GM12878 (cell line): ENCODE measurements at regions of chrX and their contacts with region 1.

Region 1: GRCh38 chrX:46628460-46629371 is 55.2 kb downstream of the CHST7 start:
- DNase-seq: peak; percentile 91
- ATAC-seq: peak; percentile 94
- H3K4me3 ChIP-seq: no peak overlapping the region
- H3K27ac ChIP-seq: peak overlapping the region; percentile 85
- H3K4me1 ChIP-seq: peaks cover 33% of the 10 kb centered on the region
- H3K27me3 ChIP-seq: no peaks in the 10 kb centered on the region
- CTCF ChIP-seq: no peak
- EP300 ChIP-seq: peak; percentile 72 to 81; a peak in 3 of 4 replicates
- POLR2A ChIP-seq: peak; percentile 52; the same call in 1 of the 2 replicates
- RAD21 ChIP-seq: 0 out of 2 replicates have a peak, but pooled peaks have one; percentile 11

Region 2: GRCh38 chrX:46561824-46562657 is 66.7 kb before region 1 on chrX:
- CTCF ChIA-PET with region 1: interaction called, 4 read pairs
- POLR2A ChIA-PET with region 1: interaction called, 5 read pairs
- RAD21 ChIA-PET with region 1: interaction called, 21 read pairs
- SMC1A ChIA-PET with region 1: interaction called, 14 read pairs
- in situ Hi-C with region 1: no loop called
- intact Hi-C with region 1: loop called (anchors 2 kb)
- DNase-seq: peak; percentile 95
- ATAC-seq: peak; percentile 99
- H3K4me3 ChIP-seq: peak overlapping the region; percentile 4; the same call in 1 of the 2 replicates
- H3K27ac ChIP-seq: peak overlapping the region; percentile 62
- H3K4me1 ChIP-seq: peaks cover 20% of the 10 kb centered on the region
- H3K27me3 ChIP-seq: no peaks in the 10 kb centered on the region
- CTCF ChIP-seq: no peak
- EP300 ChIP-seq: peak; percentile 70 to 94
- POLR2A ChIP-seq: no peak
- RAD21 ChIP-seq: 0 out of 2 replicates have a peak, but pooled peaks have one; percentile 6

Region 3: DNA sequence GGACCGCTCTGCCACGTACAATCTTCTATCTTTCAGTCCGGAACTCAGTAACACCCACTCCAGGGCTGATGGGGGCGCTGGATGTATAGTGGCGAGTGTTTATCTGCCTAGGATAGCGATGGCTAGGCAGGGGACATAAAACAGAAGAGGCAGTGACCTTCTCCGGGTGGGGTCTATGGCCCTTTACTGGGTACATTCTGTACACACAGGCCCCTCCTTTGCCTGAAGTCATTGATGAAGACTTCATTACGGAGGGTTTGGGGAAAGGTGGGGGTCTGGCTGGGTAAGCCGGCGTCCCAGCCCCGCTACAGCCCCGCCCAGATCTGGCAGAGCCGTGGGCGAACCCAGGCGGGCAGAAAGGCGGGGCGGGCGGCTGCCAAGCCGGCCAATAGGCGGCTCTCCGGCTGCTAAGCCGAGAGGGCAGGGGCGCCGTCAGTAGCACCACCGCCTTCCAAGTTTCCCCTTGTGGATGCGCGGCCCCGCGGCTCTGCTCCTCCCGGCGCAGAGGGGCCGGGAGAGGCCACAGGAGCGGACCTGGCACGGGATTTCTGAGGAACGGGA is 55.3 kb before region 1 on chrX and contains the start of gene CHST7:
- CTCF ChIA-PET with region 1: interaction called, 3 read pairs
- POLR2A ChIA-PET with region 1: interaction called, 3 read pairs
- RAD21 ChIA-PET with region 1: interaction called, 15 read pairs
- SMC1A ChIA-PET with region 1: interaction called, 4 read pairs
- in situ Hi-C with region 1: no loop called
- intact Hi-C with region 1: no loop called
- DNase-seq: no peak
- ATAC-seq: peak; percentile 65
- H3K4me3 ChIP-seq: peak within 1 kb of the TSS; percentile 69
- H3K27ac ChIP-seq: peak within 1 kb of the TSS; percentile 80
- H3K4me1 ChIP-seq: peaks cover 26% of the 10 kb centered on the region
- H3K27me3 ChIP-seq: no peaks in the 10 kb centered on the region
- CTCF ChIP-seq: peak in 2 of 3 experiments; percentile 25 to 42; a peak in 3 of 6 replicates
- EP300 ChIP-seq: no peak
- POLR2A ChIP-seq: no peak
- RAD21 ChIP-seq: peak; percentile 38
- polyA plus RNA-seq, gene CHST7: 0.58 to 1.7 TPM

Region 4: GRCh38 chrX:46588263-46588662 is 40.5 kb before region 1 on chrX:
- CTCF ChIA-PET with region 1: interaction called, 6 read pairs
- POLR2A ChIA-PET with region 1: interaction called, 6 read pairs
- RAD21 ChIA-PET with region 1: interaction called, 12 read pairs
- SMC1A ChIA-PET with region 1: interaction called, 8 read pairs
- in situ Hi-C with region 1: no loop called
- intact Hi-C with region 1: no loop called
- DNase-seq: no peak
- ATAC-seq: peak; percentile 22; the same call in 1 of the 3 replicates
- H3K4me3 ChIP-seq: no peak overlapping the region
- H3K27ac ChIP-seq: peak overlapping the region; percentile 41
- H3K4me1 ChIP-seq: peaks cover 21% of the 10 kb centered on the region
- H3K27me3 ChIP-seq: no peaks in the 10 kb centered on the region
- CTCF ChIP-seq: no peak
- EP300 ChIP-seq: no peak
- POLR2A ChIP-seq: no peak
- RAD21 ChIP-seq: no peak

Region 5: DNA sequence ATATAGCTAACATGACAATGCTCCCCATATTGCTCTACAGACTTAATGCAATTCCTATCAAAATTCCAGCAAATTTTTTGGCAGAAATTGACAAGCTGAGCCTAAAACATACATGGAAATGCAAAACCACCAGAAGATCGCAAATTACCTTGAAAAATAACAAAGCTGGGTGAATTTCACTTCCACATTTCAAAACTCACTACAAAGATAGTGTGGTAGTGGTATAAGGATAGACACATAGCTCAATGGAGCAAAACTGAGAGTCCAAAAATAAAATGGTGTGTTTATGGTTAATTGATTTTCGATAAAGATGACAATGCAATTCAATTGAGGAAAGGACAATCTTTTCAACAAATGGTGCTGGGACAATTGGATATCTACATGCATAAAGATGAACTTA is 64.4 kb after region 1 on chrX:
- CTCF ChIA-PET with region 1: interaction called, 3 read pairs
- POLR2A ChIA-PET with region 1: no interaction called
- RAD21 ChIA-PET with region 1: interaction called, 10 read pairs
- SMC1A ChIA-PET with region 1: interaction called, 4 read pairs
- in situ Hi-C with region 1: no loop called
- intact Hi-C with region 1: no loop called
- DNase-seq: peak; percentile 62
- ATAC-seq: peak; percentile 92
- H3K4me3 ChIP-seq: no peak overlapping the region
- H3K27ac ChIP-seq: peak overlapping the region; percentile 30; the same call in 1 of the 2 replicates
- H3K4me1 ChIP-seq: peaks cover 23% of the 10 kb centered on the region
- H3K27me3 ChIP-seq: no peaks in the 10 kb centered on the region
- CTCF ChIP-seq: no peak
- EP300 ChIP-seq: peak; percentile 10 to 71; a peak in 3 of 4 replicates
- POLR2A ChIP-seq: no peak
- RAD21 ChIP-seq: no peak

Region 6: DNA sequence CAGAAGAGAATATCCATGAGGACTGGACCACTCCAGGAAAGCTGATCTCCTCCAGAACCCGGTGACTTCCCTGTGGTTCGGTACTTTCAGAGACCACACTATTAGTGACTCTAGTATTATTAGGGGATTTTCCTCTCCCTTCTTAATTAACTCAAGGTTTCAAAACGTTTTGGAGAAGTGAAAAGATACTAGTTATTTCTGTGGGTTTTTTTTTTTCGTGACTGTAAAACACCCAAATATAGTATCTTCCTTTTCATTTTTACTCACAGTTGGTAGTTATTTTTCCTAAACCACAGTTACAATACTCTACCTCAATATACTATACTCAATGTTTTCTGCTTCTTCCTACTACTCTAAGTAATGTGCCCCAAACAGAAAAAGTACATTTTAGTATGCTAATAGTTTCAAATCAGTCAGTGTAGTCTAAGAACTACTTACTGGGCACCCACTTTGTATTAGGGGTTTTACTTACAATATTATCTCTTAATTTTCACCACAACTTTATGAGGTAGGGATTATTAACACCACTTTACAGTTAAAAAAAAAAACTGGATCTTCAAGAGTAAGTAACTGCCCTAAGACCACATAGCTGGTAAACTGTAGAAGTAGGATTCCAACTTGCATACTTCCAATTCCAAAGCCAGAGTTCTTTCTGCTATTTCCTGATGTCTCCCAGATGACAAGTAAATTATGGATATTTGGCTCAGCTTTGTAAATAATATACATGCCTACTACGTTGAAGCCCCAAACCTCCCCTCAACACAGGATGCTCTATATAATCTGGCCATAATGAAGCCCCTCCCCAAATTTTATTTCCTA is 85.2 kb after region 1 on chrX:
- CTCF ChIA-PET with region 1: no interaction called
- POLR2A ChIA-PET with region 1: no interaction called
- RAD21 ChIA-PET with region 1: interaction called, 3 read pairs
- SMC1A ChIA-PET with region 1: interaction called, 3 read pairs
- in situ Hi-C with region 1: no loop called
- intact Hi-C with region 1: loop called (anchors 2 kb)
- DNase-seq: peak; percentile 82
- ATAC-seq: peak; percentile 70
- H3K4me3 ChIP-seq: peak overlapping the region; percentile 33
- H3K27ac ChIP-seq: peak overlapping the region; percentile 89
- H3K4me1 ChIP-seq: peaks cover 60% of the 10 kb centered on the region
- H3K27me3 ChIP-seq: no peaks in the 10 kb centered on the region
- CTCF ChIP-seq: no peak
- EP300 ChIP-seq: peak; percentile 98 to 99
- POLR2A ChIP-seq: no peak
- RAD21 ChIP-seq: no peak